MCF 10A (cell line): ENCODE measurements at regions of chr18 and their contacts with region 1.

Region 1: GRCh38 chr18:47737956-47738355 is 192.5 kb downstream of the SMAD2 start:
- DNase-seq: no peak
- H3K4me3 Mint-ChIP-seq: no peak overlapping the region
- H3K27ac Mint-ChIP-seq: no peak overlapping the region
- H3K4me1 Mint-ChIP-seq: no peaks in the 10 kb centered on the region
- H3K27me3 Mint-ChIP-seq: peaks cover 93% of the 10 kb centered on the region
- CTCF ChIP-seq: no peak

Region 2: GRCh38 chr18:47756364-47757016 is 18.5 kb after region 1 on chr18:
- CTCF ChIA-PET with region 1: interaction called, 12 read pairs
- POLR2A ChIA-PET with region 1: no interaction called
- intact Hi-C with region 1: no loop called
- DNase-seq: peak; percentile 56
- H3K4me3 Mint-ChIP-seq: no peak overlapping the region
- H3K27ac Mint-ChIP-seq: no peak overlapping the region
- H3K4me1 Mint-ChIP-seq: no peaks in the 10 kb centered on the region
- H3K27me3 Mint-ChIP-seq: no peaks in the 10 kb centered on the region
- CTCF ChIP-seq: peak; percentile 89

Region 3: DNA sequence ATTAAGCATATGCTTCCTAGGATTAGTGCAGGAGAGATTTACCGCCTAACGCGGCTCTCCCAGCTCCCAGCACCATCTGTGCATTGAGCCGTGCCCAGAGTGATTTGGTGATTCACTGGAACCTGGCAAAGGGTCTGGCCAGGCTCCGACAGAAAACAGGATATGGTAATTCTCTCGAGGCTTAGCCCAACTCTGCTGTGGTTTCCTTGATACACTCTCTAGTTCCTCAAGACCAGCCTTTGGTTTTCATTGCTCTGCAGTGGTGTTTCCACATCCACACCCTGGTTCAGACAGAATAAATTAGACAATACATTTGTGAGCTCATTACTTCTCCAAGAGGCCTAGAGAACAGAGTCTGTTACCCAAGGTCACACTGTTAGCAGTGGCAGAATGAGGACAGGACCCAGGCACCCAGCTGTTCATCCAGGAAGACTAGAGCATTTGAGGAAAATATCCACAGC is 215.5 kb after region 1 on chr18:
- CTCF ChIA-PET with region 1: no interaction called
- POLR2A ChIA-PET with region 1: no interaction called
- intact Hi-C with region 1: no loop called
- DNase-seq: peak; percentile 81
- H3K4me3 Mint-ChIP-seq: no peak overlapping the region
- H3K27ac Mint-ChIP-seq: peak overlapping the region; percentile 81
- H3K4me1 Mint-ChIP-seq: peaks cover 8% of the 10 kb centered on the region
- H3K27me3 Mint-ChIP-seq: peaks cover 1% of the 10 kb centered on the region
- CTCF ChIP-seq: no peak